PC-3 (cell line): ENCODE measurements at regions of chr12 and their contacts with region 1.

Region 1: GRCh38 chr12:27319409-27319808 is 13.2 kb upstream of the BMAL2 start:
- DNase-seq: peak; percentile 81
- ATAC-seq: peak; percentile 58
- H3K4me3 ChIP-seq: no peak overlapping the region
- H3K27ac ChIP-seq: peak overlapping the region; percentile 70
- H3K4me1 ChIP-seq: peaks cover 52% of the 10 kb centered on the region
- H3K27me3 ChIP-seq: no peaks in the 10 kb centered on the region
- CTCF ChIP-seq: no peak

Region 2: DNA sequence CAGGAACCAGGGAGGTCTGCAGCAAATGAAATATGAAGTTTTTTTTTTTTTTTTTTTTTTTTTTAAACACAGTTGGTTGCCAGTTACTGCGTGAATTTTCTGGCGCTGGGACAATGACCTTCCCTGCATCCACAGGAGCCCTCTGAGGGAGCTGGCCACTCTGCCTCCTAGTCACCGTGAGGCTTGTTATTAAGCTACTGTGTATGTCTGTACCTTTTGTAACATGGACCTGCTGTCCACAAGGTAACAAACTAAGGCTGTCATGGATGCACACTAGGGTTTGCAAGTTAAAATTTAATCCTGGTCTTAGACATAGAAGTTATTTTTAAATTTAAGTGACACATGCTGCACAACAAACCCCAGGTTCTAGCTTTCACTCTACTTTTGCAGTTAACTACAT is 913.0 kb before region 1 on chr12:
- CTCF ChIA-PET with region 1: no interaction called
- POLR2A ChIA-PET with region 1: no interaction called
- intact Hi-C with region 1: no loop called
- DNase-seq: no peak
- ATAC-seq: no peak
- H3K4me3 ChIP-seq: no peak overlapping the region
- H3K27ac ChIP-seq: no peak overlapping the region
- H3K4me1 ChIP-seq: peaks cover 27% of the 10 kb centered on the region
- H3K27me3 ChIP-seq: no peaks in the 10 kb centered on the region
- CTCF ChIP-seq: no peak

Region 3: GRCh38 chr12:27367078-27367477 is 47.7 kb after region 1 on chr12:
- CTCF ChIA-PET with region 1: no interaction called
- POLR2A ChIA-PET with region 1: interaction called, 30 read pairs
- intact Hi-C with region 1: no loop called
- DNase-seq: peak; percentile 37
- ATAC-seq: peak; percentile 63
- H3K4me3 ChIP-seq: no peak overlapping the region
- H3K27ac ChIP-seq: peak overlapping the region; percentile 39
- H3K4me1 ChIP-seq: peaks cover 22% of the 10 kb centered on the region
- H3K27me3 ChIP-seq: no peaks in the 10 kb centered on the region
- CTCF ChIP-seq: no peak

Region 4: DNA sequence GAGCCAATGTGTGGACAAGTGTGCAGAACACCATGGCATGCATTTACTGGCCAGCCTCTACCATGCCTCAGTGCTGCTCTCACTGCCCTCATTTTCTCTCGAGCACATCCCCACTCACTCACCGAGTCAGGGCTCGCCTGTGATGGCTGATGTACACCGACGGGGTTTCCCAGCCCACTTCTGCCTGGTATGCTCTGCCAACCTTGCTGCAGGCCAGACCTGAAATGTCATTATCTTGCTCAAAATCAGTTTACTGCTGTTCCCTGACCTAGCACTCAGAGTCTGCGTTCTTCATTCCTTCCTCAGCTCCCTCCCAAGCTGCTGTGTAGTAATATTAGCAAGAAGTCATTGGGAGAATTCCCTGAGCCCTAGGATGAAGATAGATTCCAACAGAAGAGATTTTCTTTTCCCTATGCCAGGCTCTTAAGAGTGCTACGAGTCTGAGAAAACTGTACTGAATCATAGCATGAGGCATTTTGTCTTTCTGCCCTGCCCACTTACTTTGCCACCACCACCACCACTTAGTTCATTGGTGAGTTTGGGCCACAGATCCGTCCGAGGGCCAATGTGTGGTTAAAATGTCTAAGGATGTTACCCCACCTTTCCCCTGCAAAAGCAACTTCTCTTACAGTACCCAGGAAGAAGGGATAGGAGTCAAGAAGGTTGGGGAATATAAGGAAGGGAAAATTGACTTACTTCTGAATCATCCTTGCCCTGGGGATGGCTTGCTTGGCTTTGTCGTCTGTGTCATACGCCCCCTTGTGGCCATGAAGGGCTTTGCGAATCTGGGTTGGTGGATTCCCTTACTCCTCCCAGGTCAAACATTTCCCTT is 64.2 kb after region 1 on chr12:
- CTCF ChIA-PET with region 1: no interaction called
- POLR2A ChIA-PET with region 1: no interaction called
- intact Hi-C with region 1: loop called (anchors 1 kb)
- DNase-seq: peak; percentile 98
- ATAC-seq: peak; percentile 86
- H3K4me3 ChIP-seq: no peak overlapping the region
- H3K27ac ChIP-seq: peak overlapping the region; percentile 72
- H3K4me1 ChIP-seq: peaks cover 24% of the 10 kb centered on the region
- H3K27me3 ChIP-seq: no peaks in the 10 kb centered on the region
- CTCF ChIP-seq: peak; percentile 98